ENCODE measurements at regions of chr7 and their contacts with region 1.

Region 1: DNA sequence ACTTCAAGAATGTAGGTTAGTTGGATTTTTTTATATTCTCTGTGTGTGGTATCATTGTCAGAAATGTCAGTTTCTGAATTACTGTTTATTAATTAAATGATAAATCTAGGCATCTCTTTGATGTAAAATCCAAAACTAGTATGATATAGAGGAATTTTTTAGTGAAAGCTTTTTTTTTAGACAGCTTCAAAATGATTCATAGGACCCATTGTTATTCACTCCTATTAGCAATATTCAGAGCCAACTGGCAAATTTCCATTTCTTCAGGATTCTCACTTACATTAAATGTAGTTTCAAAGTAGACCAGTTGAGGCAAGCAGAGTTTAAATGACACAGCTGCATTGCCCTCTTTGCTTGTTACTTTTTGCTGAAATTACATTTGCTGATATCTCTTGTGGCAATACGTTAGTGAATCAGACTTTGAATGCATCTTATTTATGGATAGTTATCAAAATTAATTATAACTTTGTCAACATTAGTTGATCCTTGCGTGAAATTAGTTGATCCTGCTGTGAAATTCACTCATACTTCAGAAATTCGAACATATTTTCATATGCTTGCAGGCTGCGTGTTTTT is 20.3 kb downstream of the ZNF277 start:
- DNase-seq: no peak
- H3K4me3 ChIP-seq: no peak overlapping the region
- H3K27ac ChIP-seq: no peak overlapping the region
- H3K4me1 ChIP-seq: no peaks in the 10 kb centered on the region
- H3K27me3 ChIP-seq: no peaks in the 10 kb centered on the region
- CTCF ChIP-seq: no peak
- EP300 ChIP-seq: no peak
- POLR2A ChIP-seq: no peak

Region 2: DNA sequence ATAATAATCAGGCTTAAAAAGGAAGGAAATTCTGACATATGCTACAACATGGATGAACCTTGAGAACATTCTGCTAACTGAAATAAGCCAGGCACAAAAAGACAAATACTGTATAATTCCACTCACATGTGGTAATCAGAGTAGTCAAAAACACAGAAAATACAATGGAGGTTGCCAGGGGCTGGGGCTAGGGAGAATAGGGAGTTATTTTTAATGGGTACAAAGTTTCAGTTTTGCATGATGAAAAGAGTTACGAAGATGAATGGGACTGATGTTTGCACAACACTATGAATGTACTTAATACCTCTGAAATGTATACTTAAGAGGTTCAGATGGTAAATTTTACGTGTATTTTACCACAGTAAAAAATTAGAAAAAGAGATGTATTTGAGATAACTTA is 166.2 kb before region 1 on chr7:
- in situ Hi-C with region 1: no loop called
- intact Hi-C with region 1: no loop called
- DNase-seq: no peak
- H3K4me3 ChIP-seq: no peak overlapping the region
- H3K27ac ChIP-seq: no peak overlapping the region
- H3K4me1 ChIP-seq: no peaks in the 10 kb centered on the region
- H3K27me3 ChIP-seq: no peaks in the 10 kb centered on the region
- CTCF ChIP-seq: no peak
- EP300 ChIP-seq: no peak
- POLR2A ChIP-seq: no peak

Region 3: DNA sequence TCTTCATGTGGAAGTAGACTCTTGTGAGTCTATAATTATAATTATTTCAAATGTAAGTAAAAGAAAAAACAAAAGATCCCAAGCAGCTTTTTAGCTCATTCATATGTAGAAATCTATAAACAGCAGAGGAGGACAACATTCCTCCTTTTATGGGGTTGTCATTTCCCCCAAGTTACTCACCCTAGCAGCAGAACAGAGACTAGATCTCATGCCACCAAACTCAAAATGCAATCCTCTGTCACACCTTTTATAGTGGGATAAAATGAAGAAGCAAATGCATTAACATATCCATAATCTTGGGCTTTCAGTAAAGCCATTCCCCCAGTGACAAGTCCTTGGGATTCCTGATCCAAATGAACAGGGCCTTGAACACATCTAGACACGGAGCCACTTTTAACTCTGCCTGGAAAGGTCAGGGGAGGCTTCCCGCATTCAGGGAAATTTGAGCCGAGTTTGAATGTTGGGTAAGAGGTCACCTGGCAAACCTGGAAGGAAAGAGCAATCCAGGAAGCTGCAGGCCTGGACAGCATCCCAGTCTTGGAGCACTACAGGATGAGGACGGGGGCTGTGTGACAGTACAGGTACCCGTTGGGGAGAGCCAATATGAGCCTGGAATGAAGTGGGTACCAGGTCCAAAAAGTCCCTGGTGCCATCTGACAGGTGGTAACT is 97.0 kb before region 1 on chr7:
- in situ Hi-C with region 1: no loop called
- intact Hi-C with region 1: no loop called
- DNase-seq: no peak
- H3K4me3 ChIP-seq: no peak overlapping the region
- H3K27ac ChIP-seq: no peak overlapping the region
- H3K4me1 ChIP-seq: peaks cover 0 to 5% (median 2%) of the 10 kb centered on the region in 4 donors
- H3K27me3 ChIP-seq: no peaks in the 10 kb centered on the region
- CTCF ChIP-seq: no peak
- EP300 ChIP-seq: no peak
- POLR2A ChIP-seq: no peak

Region 4: GRCh38 chr7:112260950-112261349 is 34.2 kb after region 1 on chr7:
- in situ Hi-C with region 1: no loop called
- intact Hi-C with region 1: loop called (anchors 1 kb)
- DNase-seq: no peak
- H3K4me3 ChIP-seq: no peak overlapping the region
- H3K27ac ChIP-seq: no peak overlapping the region
- H3K4me1 ChIP-seq: peaks cover 0 to 30% (median 13%) of the 10 kb centered on the region in 4 donors
- H3K27me3 ChIP-seq: no peaks in the 10 kb centered on the region
- CTCF ChIP-seq: no peak
- EP300 ChIP-seq: no peak
- POLR2A ChIP-seq: no peak

Region 5: DNA sequence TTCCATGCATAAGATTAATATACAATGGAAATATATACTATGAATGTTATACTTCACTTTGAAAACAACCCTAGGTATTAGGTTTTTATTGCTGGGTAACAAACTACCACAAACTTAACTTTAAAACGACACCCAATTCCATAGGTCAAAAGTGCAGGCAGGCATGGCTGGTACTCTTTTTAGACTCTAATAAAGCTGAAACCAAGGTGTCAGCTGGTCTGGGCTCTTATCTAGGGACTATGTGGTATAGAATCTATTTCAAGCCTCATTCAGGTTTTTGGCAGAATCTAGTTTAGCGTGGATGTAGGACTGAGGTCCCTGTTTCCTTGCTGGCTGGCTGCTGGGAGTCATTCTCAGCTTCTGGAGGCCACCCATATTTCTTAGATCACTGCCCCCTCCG is 628.4 kb after region 1 on chr7:
- in situ Hi-C with region 1: no loop called
- intact Hi-C with region 1: no loop called
- DNase-seq: no peak
- H3K4me3 ChIP-seq: no peak overlapping the region
- H3K27ac ChIP-seq: peak overlapping the region in 1 of 4 donors; percentile 7
- H3K4me1 ChIP-seq: peaks cover 3 to 27% (median 14%) of the 10 kb centered on the region in 4 donors
- H3K27me3 ChIP-seq: no peaks in the 10 kb centered on the region
- CTCF ChIP-seq: no peak
- EP300 ChIP-seq: no peak
- POLR2A ChIP-seq: no peak

Measured in transverse colon (tissue), 4 donors.